ENCODE measurements at regions of chr7 and their contacts with region 1.

Region 1: GRCh38 chr7:101169838-101170551 is 4.6 kb upstream of the VGF start:
- DNase-seq: peak; percentile 80
- ATAC-seq: peak; percentile 38 to 41

Region 2: GRCh38 chr7:100889761-100890634 is 280.0 kb before region 1 on chr7:
- intact Hi-C with region 1: loop called in 1 of 2 experiments (anchors 10 kb)
- DNase-seq: peak; percentile 95
- ATAC-seq: peak; percentile 91

Region 3: DNA sequence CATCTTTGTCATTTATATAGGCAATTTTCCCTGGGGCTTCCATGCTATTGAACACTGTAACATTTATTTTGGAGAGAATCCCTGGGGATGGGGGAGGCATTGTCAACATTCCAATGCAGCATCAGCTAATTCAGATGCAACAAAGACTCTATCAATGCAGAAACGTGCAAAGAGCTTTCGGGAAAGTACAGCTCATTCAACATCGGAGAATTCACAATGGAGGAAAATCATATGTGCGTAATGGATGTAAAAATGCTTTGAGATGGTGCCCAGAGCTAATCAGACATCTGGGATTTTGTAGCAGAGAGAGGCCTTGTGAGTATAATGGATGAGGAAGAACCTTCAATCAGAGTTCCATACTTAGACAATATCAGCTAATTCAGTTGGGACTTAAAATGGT is 103.2 kb after region 1 on chr7:
- intact Hi-C with region 1: no loop called
- DNase-seq: no peak
- ATAC-seq: no peak

Measured in left cardiac atrium (tissue), 4 donors.